K562 (cell line): ENCODE measurements at regions of chr1 and their contacts with region 1.

Region 1: DNA sequence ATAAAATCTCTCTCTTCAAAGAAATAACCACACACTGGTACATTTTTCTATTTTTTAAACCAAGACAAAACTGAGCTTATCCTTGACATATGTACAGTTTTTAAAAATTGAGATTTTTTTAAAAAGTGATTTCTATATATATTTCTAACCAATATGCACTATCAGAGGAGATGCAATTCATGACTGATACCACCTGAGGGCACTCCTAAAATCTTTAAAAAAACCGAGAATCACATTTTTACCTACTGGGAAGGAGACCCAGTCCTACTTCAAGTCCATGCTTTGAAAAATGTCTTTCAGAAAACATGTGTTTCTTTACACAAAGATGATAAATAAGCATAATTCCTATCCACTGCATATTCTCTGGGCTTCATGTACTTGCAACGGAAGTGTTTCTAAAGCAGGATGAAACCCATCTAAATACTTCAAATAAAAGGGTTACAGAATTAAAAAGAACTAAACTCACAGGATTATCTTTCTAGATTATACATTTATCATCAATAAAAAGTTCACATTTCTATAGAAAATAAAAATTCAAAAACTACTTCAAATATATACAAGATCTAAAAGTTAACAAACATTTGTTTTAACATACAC is 98.6 kb downstream of the ENAH start:
- DNase-seq: peak; percentile 22 to 34 (median 30)
- ATAC-seq: peak; percentile 73; the same call in 2 of the 3 replicates
- H3K4me3 ChIP-seq: no peak overlapping the region
- H3K27ac ChIP-seq: no peak overlapping the region
- H3K4me1 ChIP-seq: no peaks in the 10 kb centered on the region
- H3K27me3 ChIP-seq: peaks cover 11 to 14% of the 10 kb centered on the region in 2 experiments; a peak in 3 of 5 replicates
- CTCF ChIP-seq: peak; percentile 53 to 68 (median 59); a peak in 4 of 6 replicates
- EP300 ChIP-seq: no peak
- POLR2A ChIP-seq: no peak
- RAD21 ChIP-seq: peak; percentile 64 to 76

Region 2: DNA sequence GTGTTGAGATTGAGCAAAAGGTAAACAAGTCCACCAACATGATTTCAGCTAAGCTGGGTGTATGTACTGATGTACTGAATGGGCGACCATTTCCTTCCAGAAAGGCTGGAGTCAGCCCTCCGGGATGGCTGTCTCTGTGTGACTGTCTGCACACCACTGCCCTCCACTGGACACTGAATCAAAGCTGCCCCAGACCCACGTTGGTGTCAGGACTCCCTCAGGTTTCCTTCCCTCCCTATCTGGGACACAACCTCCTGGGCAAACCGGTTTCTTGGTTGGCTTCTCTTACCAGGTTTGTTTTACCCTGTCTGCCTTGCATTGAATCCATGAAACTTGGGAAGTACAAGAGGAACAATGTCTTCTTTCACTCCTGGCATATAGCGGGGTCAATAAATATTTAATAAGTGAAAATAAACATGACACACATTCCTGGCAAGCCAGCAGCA is 218.0 kb after region 1 on chr1:
- CTCF ChIA-PET with region 1: interaction called, 3 read pairs
- POLR2A ChIA-PET with region 1: no interaction called
- in situ Hi-C with region 1: no loop called
- intact Hi-C with region 1: loop called (anchors 1 kb)
- DNase-seq: peak; percentile 78 to 90 (median 80)
- ATAC-seq: peak; percentile 93
- H3K4me3 ChIP-seq: no peak overlapping the region
- H3K27ac ChIP-seq: no peak overlapping the region
- H3K4me1 ChIP-seq: peaks cover 13 to 23% of the 10 kb centered on the region in 2 experiments
- H3K27me3 ChIP-seq: no peaks in the 10 kb centered on the region
- CTCF ChIP-seq: peak; percentile 92 to 97 (median 95)
- EP300 ChIP-seq: no peak
- POLR2A ChIP-seq: no peak
- RAD21 ChIP-seq: peak; percentile 93 to 97

Region 3: DNA sequence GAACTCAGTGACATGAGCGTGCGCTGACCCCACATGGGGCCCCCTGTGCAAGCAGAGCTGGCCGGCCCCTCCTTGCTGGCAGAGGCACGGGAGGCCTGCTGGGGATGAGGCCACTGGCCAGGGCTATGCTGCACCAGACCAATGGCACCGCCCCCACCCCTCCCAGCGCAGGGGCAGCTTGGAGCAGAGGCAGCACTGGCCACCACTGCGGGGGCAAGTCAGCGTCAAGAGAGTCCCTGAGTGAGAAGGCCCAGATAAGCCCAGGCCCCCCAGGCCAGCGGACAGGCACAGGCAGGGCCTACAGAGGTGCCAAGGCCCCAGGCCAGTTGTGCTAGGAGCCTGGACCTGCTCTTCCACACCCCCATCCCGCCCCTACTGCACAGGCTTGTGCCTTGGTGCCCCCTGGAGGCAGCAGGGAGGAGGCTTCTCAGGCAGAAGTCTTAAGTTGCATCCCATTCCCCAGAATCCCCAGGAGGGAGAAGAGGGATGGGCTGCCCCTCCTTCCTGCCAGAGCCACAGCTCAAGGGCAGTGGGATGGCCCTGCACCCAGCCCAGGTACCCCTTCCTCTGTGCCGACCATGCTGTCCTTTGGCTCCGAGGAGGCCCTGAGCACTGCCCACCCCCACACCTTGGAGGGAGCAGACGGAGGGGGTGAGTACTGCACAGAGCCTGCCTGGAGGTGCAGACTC is 291.4 kb after region 1 on chr1:
- CTCF ChIA-PET with region 1: interaction called, 7 read pairs
- POLR2A ChIA-PET with region 1: no interaction called
- in situ Hi-C with region 1: no loop called
- intact Hi-C with region 1: loop called (anchors 2 kb)
- DNase-seq: peak; percentile 78 to 87 (median 82)
- ATAC-seq: peak; percentile 90
- H3K4me3 ChIP-seq: no peak overlapping the region
- H3K27ac ChIP-seq: no peak overlapping the region
- H3K4me1 ChIP-seq: peaks cover 9 to 42% of the 10 kb centered on the region in 2 experiments; a peak in 4 of 5 replicates
- H3K27me3 ChIP-seq: no peaks in the 10 kb centered on the region
- CTCF ChIP-seq: peak; percentile 85 to 91 (median 90)
- EP300 ChIP-seq: no peak
- POLR2A ChIP-seq: no peak; the same call in 1 of the 2 replicates
- RAD21 ChIP-seq: peak; percentile 82 to 87

Region 4: GRCh38 chr1:225962440-225962975 is 408.2 kb after region 1 on chr1:
- CTCF ChIA-PET with region 1: no interaction called
- POLR2A ChIA-PET with region 1: no interaction called
- in situ Hi-C with region 1: no loop called
- intact Hi-C with region 1: loop called (anchors 5 kb)
- DNase-seq: peak; percentile 89 to 91 (median 90)
- ATAC-seq: peak; percentile 99
- H3K4me3 ChIP-seq: peak overlapping the region; percentile 15
- H3K27ac ChIP-seq: no peak overlapping the region; the same call in 2 of the 3 replicates
- H3K4me1 ChIP-seq: peaks cover 0 to 12% of the 10 kb centered on the region in 2 experiments; a peak in 4 of 5 replicates
- H3K27me3 ChIP-seq: no peaks in the 10 kb centered on the region
- CTCF ChIP-seq: peak; percentile 99
- EP300 ChIP-seq: no peak
- POLR2A ChIP-seq: no peak
- RAD21 ChIP-seq: peak; percentile 87 to 97